CD4-positive, alpha-beta T cell (primary cell): ENCODE measurements at regions of chr4 and their contacts with region 1.

Region 1: DNA sequence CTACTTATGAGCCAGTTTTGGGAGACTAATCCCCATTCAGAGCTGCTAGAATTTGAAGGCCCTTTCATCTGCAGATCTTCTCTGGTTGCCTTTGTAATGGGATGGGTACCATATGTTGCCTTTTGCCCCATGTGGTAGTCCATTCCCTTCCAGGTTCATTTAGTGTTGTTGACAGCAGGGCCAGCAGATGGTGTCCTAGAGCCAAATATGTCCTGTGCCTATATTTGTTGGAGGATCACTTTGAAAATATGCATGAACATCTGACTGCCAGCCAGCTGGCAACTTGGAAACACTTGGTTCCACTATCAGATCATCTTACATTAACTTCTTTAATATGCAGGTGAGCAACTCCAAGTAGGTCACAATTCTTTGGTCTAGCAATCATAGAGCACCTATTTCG is 30.4 kb downstream of the CFAP299 start:
- DNase-seq: peak; percentile 31 to 75 (median 48)
- ATAC-seq: peak; percentile 79
- H3K4me3 ChIP-seq: no peak overlapping the region
- H3K4me3 Mint-ChIP-seq: no peak overlapping the region
- H3K27ac ChIP-seq: no peak overlapping the region
- H3K27ac Mint-ChIP-seq: no peak overlapping the region
- H3K4me1 ChIP-seq: peaks cover 3% of the 10 kb centered on the region
- H3K4me1 Mint-ChIP-seq: peaks cover 10% of the 10 kb centered on the region
- H3K27me3 ChIP-seq: no peaks in the 10 kb centered on the region
- H3K27me3 Mint-ChIP-seq: no peaks in the 10 kb centered on the region
- CTCF ChIP-seq: peak; percentile 73

Region 2: DNA sequence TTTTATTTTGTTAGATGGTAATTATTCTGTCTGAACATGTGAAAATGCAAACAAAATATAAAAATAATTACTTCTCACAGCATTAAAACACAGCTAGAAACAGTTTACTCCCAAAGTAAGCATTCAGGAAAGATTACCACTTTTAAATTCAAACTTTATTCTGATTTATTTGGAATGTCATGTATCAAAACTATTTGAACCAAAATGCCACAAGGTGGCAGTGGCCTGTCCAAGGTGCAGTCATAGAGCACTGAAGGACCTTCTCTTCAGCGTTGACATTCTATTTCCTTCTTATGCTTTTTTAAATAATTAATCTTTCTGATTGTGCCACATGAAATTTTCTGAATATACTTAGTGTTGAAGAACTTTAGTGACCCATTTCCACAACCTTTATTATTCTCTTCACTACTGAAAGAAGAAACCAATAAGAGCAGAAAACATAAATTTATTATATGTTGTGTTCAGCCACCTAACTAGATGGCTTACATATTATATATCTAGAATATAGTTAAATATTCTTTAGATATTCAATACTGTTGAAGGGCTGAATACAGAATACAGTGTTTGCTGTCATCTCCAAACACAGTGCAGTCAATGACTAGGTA is 253.2 kb after region 1 on chr4:
- CTCF ChIA-PET with region 1: no interaction called
- POLR2A ChIA-PET with region 1: no interaction called
- intact Hi-C with region 1: loop called in 1 of 2 experiments (anchors 10 kb)
- DNase-seq: peak in 1 of 14 experiments; percentile 3
- ATAC-seq: no peak
- H3K4me3 ChIP-seq: no peak overlapping the region
- H3K4me3 Mint-ChIP-seq: no peak overlapping the region
- H3K27ac ChIP-seq: no peak overlapping the region
- H3K27ac Mint-ChIP-seq: no peak overlapping the region
- H3K4me1 ChIP-seq: no peaks in the 10 kb centered on the region
- H3K4me1 Mint-ChIP-seq: no peaks in the 10 kb centered on the region
- H3K27me3 ChIP-seq: no peaks in the 10 kb centered on the region
- H3K27me3 Mint-ChIP-seq: no peaks in the 10 kb centered on the region
- CTCF ChIP-seq: no peak

Region 3: DNA sequence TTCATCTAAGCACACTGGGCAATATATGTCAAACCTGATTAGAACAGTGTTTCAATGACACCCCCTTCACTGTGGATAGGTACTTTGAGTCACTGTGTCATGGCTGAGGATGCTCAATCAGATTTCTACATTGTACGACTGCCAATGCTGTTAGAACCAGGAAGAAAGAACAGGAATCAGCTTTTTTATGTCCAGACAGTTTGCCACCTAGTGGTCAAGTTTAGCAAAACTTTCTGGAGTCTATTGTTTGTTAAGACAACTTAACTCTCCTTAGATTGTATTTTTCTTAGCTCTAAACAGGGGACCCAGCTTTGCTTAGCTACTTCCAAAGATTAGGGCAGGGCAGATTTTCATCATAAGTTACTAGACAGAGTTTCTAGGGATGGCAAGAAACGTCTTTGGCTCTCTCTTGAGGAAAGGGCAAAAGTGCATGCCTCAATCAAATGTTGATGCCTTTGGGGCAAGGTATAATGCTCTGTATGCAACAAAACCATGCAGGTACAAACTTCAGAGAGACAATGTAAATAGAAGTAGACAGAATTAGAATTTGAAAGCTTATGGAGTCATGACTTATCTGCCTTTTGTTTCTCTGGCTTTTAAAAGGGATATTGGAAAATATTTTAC is 624.1 kb after region 1 on chr4:
- CTCF ChIA-PET with region 1: interaction called, 12 read pairs
- POLR2A ChIA-PET with region 1: interaction called, 4 read pairs
- intact Hi-C with region 1: loop called (anchors 1 kb)
- DNase-seq: peak in 5 of 14 experiments; percentile 2 to 69 (median 67)
- ATAC-seq: peak; percentile 48
- H3K4me3 ChIP-seq: no peak overlapping the region
- H3K4me3 Mint-ChIP-seq: no peak overlapping the region
- H3K27ac ChIP-seq: no peak overlapping the region
- H3K27ac Mint-ChIP-seq: no peak overlapping the region
- H3K4me1 ChIP-seq: no peaks in the 10 kb centered on the region
- H3K4me1 Mint-ChIP-seq: peaks cover 4% of the 10 kb centered on the region
- H3K27me3 ChIP-seq: peaks cover 3% of the 10 kb centered on the region in 2 experiments
- H3K27me3 Mint-ChIP-seq: peaks cover 19% of the 10 kb centered on the region
- CTCF ChIP-seq: peak; percentile 85

Region 4: GRCh38 chr4:81040012-81040659 is 674.2 kb after region 1 on chr4:
- CTCF ChIA-PET with region 1: interaction called, 14 read pairs
- POLR2A ChIA-PET with region 1: interaction called, 6 read pairs
- intact Hi-C with region 1: loop called (anchors 1 kb)
- DNase-seq: peak in 3 of 14 experiments; percentile 53 to 58 (median 58)
- ATAC-seq: no peak
- H3K4me3 ChIP-seq: no peak overlapping the region
- H3K4me3 Mint-ChIP-seq: no peak overlapping the region
- H3K27ac ChIP-seq: no peak overlapping the region
- H3K27ac Mint-ChIP-seq: no peak overlapping the region
- H3K4me1 ChIP-seq: no peaks in the 10 kb centered on the region
- H3K4me1 Mint-ChIP-seq: no peaks in the 10 kb centered on the region
- H3K27me3 ChIP-seq: peaks cover 0 to 18% of the 10 kb centered on the region in 2 experiments
- H3K27me3 Mint-ChIP-seq: peaks cover 40% of the 10 kb centered on the region
- CTCF ChIP-seq: peak; percentile 63

Region 5: DNA sequence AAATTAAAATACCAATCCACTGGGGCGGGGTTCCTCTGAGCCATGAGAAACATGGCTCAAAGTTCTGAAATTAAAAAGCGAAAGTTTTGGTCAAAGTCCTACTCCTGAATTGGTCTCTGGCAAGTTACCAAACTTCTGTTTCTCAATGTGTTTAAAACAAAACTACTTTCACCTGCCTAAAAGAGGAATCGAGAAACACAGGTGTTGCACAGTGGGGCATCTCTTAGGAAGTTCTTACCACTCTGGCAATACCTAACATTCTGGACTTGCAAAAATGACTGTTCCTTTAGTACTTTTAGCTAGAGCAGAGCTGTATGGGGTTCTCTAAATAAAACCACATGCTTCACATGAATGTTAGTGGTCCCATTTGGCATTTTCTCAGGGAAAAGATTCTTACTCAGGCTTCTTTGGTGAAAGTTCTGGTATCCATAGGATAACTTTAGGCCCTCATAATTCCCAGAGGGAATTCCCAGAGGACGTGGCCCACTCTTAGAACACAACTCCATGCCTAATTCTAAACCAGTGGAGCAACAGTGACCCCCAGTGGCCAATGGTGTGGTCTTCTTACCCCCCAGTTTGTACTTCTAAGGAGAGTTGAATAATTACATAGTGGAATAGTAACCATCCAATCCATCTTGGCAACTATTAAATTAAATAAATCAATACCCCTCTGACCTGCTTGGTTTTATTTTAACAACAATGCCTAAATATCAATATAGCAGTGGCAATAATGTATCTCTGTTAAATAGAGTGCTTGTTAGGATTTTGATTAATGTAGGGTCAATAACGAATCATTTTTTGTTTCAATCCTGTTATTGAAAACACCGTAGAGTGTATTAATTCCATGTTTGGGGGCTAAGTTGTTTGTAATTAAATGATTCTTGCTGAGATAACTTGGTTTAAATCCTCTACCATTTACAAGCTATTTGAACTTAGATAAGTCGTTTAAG is 686.5 kb after region 1 on chr4:
- CTCF ChIA-PET with region 1: interaction called, 5 read pairs
- POLR2A ChIA-PET with region 1: interaction called, 4 read pairs
- intact Hi-C with region 1: loop called in 1 of 2 experiments (anchors 1 kb)
- DNase-seq: peak; percentile 11 to 62 (median 32)
- ATAC-seq: peak; percentile 48
- H3K4me3 ChIP-seq: no peak overlapping the region
- H3K4me3 Mint-ChIP-seq: no peak overlapping the region
- H3K27ac ChIP-seq: no peak overlapping the region
- H3K27ac Mint-ChIP-seq: no peak overlapping the region
- H3K4me1 ChIP-seq: no peaks in the 10 kb centered on the region
- H3K4me1 Mint-ChIP-seq: no peaks in the 10 kb centered on the region
- H3K27me3 ChIP-seq: no peaks in the 10 kb centered on the region
- H3K27me3 Mint-ChIP-seq: peaks cover 6% of the 10 kb centered on the region
- CTCF ChIP-seq: peak; percentile 69

Region 6: DNA sequence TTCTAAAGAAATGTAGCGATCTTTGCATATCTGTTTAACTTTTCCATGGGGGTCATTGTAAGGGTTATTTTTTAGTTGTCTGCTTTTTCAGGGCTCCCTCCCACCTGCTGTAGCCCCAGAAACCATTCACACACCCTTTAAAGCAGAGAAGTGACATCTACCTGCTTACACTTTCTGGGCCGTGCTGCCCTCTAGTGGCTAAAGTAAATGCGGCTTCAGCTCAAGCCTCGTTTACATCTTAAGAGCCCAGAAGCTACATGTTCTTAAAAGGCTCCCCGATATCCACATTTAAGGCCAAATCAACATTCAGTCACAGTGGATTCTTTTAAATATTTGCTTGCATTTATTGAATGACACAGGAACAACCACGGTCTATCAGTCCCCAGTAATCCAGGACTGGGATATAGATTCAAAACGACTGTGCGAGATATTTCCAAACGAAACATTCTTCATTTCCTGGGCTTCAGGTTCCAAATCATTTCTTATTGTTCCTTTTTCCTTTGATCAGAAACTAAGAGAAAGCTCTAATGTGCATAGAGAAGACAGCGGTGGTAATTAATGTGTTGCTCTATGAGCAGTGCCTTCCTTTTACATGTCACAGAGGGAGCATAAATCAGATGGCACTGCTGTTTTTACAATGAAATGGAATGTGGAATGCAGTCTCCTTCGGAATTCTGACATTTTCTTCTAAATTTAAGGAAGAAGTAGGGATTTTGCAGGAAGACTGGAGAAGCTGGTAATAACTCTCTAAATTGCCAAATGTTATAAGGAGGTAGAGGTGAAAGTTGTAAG is 985.9 kb after region 1 on chr4:
- CTCF ChIA-PET with region 1: interaction called, 6 read pairs
- POLR2A ChIA-PET with region 1: no interaction called
- intact Hi-C with region 1: loop called in 1 of 2 experiments (anchors 1 kb)
- DNase-seq: peak; percentile 42 to 76 (median 53)
- ATAC-seq: peak; percentile 48
- H3K4me3 ChIP-seq: no peak overlapping the region
- H3K4me3 Mint-ChIP-seq: no peak overlapping the region
- H3K27ac ChIP-seq: no peak overlapping the region
- H3K27ac Mint-ChIP-seq: no peak overlapping the region
- H3K4me1 ChIP-seq: no peaks in the 10 kb centered on the region
- H3K4me1 Mint-ChIP-seq: no peaks in the 10 kb centered on the region
- H3K27me3 ChIP-seq: peaks cover 0 to under 1% of the 10 kb centered on the region in 2 experiments
- H3K27me3 Mint-ChIP-seq: peaks cover 32% of the 10 kb centered on the region
- CTCF ChIP-seq: peak; percentile 93